IMR-90 (cell line): ENCODE measurements at regions of chr11 and their contacts with region 1.

Region 1: DNA sequence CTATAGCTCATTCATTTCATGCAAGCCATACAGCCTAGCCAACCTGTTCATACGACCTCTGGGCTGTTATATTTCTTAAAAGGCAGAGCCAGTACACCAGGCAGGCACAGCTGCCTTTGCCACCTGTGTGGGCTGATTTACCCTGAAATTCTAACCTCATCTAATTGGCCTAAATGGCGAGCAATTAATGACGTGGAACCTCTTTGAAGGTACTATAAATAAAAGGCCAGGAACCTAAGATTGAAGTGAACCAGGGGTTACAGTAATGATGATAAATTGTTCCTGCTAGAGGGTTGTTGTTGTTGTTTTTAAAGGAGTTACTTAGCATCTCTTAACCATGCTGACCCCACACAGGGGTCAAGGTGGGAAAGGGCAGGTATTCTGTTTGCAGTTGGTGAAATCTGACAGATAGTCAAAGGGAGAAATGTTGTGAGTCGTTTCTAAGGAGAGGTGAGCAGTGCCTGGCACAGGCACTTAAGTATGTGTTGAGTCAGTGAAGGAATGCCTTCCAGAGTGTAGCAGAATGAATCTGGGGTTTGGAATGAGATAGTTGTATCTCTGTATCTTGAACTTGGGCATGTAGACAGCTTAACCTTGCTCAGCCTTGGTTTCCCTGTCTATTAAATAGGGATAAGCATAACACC is 213.5 kb upstream of the NAV2 start:
- DNase-seq: peak; percentile 58
- ATAC-seq: peak; percentile 95
- H3K4me3 ChIP-seq: no peak overlapping the region
- H3K27ac ChIP-seq: no peak overlapping the region
- H3K4me1 ChIP-seq: no peaks in the 10 kb centered on the region
- H3K27me3 ChIP-seq: peaks cover 5% of the 10 kb centered on the region
- CTCF ChIP-seq: no peak
- POLR2A ChIP-seq: no peak
- RAD21 ChIP-seq: no peak

Region 2: DNA sequence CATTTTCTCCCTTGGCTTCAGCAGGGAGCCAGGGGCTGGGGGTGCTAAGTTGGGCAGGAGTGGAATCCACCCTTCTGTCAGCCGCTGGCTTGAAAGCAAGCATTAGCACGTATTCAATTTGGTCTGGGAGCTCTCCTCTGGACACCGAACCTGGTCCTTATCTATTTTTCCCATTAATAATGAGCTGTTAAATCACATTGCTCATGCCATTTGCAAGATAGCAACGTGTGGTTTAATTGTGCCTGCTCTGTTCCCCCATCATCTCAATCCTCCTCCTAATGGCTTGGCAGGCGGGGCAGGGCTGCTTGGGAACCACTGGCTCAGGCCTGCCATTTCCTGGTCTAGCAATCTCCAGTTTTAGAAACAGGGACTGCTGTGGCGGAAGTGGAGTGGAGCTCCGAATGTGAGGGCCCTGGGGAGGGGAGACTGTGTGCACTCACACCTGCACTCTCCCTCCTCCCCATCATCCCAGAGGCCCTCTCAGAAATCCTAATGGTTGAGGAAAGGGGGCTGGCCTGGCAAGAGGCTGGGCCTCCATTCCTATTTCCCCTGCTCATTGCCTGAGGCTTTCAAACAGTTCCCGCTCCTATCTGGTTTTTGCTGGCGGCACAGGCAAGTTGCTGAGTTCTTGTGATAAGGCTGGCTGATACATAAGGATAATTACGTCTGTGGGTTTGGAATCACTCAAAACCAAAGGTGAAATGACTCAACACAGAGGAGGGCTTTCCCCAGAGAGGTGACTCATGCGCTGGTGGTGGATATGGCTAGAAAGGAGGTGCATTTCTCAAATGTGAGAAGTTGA is 57.2 kb before region 1 on chr11:
- CTCF ChIA-PET with region 1: no interaction called
- POLR2A ChIA-PET with region 1: no interaction called
- dilution Hi-C with region 1: no loop called
- in situ Hi-C with region 1: no loop called
- intact Hi-C with region 1: loop called (anchors 2 kb)
- DNase-seq: peak; percentile 98
- ATAC-seq: peak; percentile 84
- H3K4me3 ChIP-seq: no peak overlapping the region
- H3K27ac ChIP-seq: peak overlapping the region; percentile 25
- H3K4me1 ChIP-seq: peaks cover 11% of the 10 kb centered on the region
- H3K27me3 ChIP-seq: peaks cover 7% of the 10 kb centered on the region; the same call in 1 of the 2 replicates
- CTCF ChIP-seq: no peak
- POLR2A ChIP-seq: no peak
- RAD21 ChIP-seq: no peak

Region 3: DNA sequence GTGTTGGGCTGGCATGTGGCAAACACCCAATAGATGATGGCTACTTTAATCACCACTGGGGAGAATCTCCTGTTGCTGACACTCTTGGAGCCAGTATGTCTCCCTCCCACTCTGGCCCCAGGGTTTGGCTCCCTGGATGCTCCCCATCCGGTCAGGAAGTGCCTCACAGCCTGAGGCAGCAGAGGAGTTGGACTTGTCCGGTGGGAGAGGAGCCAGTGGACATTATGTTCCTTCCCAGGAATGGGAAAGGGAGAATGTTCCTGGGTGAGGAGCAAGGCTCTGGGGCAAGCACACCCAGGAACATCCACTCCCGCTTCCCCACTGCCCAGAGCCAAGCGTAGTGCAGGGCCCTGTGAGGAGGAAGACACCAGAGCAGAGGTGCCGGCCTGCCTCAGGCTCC is 128.9 kb after region 1 on chr11:
- CTCF ChIA-PET with region 1: no interaction called
- POLR2A ChIA-PET with region 1: no interaction called
- dilution Hi-C with region 1: no loop called
- in situ Hi-C with region 1: no loop called
- intact Hi-C with region 1: no loop called
- DNase-seq: peak; percentile 59
- ATAC-seq: peak; percentile 74
- H3K4me3 ChIP-seq: no peak overlapping the region
- H3K27ac ChIP-seq: no peak overlapping the region
- H3K4me1 ChIP-seq: peaks cover 12% of the 10 kb centered on the region
- H3K27me3 ChIP-seq: no peaks in the 10 kb centered on the region
- CTCF ChIP-seq: no peak
- POLR2A ChIP-seq: no peak
- RAD21 ChIP-seq: no peak